ENCODE measurements at regions of chr7 and their contacts with region 1.

Region 1: DNA sequence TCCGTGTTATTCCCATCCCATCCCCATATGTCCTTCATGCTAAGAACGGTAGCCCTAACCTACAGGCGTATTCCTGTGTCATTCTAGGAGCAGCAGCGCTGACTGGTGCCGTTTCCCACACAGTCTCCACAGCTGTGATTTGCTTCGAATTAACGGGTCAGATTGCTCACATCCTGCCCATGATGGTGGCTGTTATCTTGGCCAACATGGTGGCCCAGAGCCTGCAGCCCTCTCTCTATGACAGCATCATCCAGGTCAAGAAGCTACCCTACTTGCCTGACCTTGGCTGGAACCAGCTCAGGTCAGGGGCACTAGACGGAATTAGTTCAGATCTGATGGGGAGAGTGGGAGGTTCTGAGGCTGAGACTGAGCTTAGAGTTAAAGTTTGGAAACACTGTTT is 20.7 kb downstream of the FAM131B start:
- DNase-seq: no peak
- H3K4me3 ChIP-seq: no peak overlapping the region
- H3K27ac ChIP-seq: no peak overlapping the region
- H3K4me1 ChIP-seq: no peaks in the 10 kb centered on the region
- CTCF ChIP-seq: no peak

Region 2: DNA sequence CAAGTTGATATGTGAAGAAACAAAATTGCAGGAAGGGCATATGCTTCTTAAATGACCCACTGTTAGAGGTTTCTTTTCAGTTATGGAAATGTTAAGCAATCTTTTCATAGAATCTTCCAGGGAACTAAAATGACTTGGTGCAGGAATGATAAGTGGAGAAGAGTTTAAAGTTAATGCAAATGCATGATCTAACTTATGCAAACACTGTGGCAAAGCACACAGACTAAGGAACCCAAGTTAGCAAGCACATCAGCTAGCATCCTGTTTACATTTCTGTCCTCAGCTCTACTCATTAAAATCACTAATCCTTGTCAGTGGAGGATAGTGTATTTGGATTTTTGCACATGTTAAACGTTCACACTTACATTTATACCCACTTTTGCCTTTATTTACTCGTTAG is 16.6 kb before region 1 on chr7:
- CTCF ChIA-PET with region 1: no interaction called
- POLR2A ChIA-PET with region 1: interaction called, 5 read pairs
- intact Hi-C with region 1: loop called (anchors 2 kb)
- DNase-seq: peak; percentile 22
- H3K4me3 ChIP-seq: peak overlapping the region; percentile 19
- H3K27ac ChIP-seq: no peak overlapping the region
- H3K4me1 ChIP-seq: peaks cover 31% of the 10 kb centered on the region
- CTCF ChIP-seq: no peak

Measured in OCI-LY7 (cell line).